ENCODE measurements at regions of chr6 and their contacts with region 1.

Region 1: DNA sequence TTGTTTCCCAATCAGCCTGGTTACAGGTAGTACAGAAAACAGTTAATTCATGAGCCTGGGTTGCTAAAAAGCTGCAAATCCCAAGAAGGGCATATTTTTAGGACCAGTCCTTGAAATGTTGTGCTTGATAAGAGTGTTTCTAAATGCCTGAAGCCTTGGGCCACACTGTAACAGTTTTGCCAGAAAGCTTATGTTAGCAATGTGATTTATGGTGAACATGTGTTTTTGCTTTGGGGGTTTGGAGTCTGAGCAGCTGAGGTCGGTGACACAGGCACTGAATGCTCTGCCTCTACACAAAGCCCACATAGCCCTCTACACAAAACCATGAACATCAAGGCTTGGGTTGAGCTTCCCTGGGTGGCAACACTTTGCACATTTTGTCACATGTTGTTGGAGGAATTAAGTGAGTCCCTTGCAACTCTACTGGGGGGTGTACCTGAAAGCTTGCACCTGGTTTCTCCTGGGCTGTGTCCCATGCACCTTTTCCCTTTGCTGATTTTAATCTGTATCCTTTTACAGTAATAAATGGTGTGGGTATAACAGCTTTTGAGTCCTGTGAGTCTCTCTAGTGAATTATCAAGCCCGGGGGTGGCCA is 22.2 kb downstream of the AHI1 start:
- DNase-seq: no peak
- H3K4me3 ChIP-seq: no peak overlapping the region
- H3K27ac ChIP-seq: no peak overlapping the region
- H3K4me1 ChIP-seq: no peaks in the 10 kb centered on the region
- CTCF ChIP-seq: no peak

Region 2: GRCh38 chr6:135488023-135488422 is 12.6 kb after region 1 on chr6:
- CTCF ChIA-PET with region 1: no interaction called
- POLR2A ChIA-PET with region 1: interaction called, 14 read pairs
- intact Hi-C with region 1: no loop called
- DNase-seq: no peak
- H3K4me3 ChIP-seq: no peak overlapping the region
- H3K27ac ChIP-seq: no peak overlapping the region
- H3K4me1 ChIP-seq: no peaks in the 10 kb centered on the region
- CTCF ChIP-seq: no peak

Region 3: DNA sequence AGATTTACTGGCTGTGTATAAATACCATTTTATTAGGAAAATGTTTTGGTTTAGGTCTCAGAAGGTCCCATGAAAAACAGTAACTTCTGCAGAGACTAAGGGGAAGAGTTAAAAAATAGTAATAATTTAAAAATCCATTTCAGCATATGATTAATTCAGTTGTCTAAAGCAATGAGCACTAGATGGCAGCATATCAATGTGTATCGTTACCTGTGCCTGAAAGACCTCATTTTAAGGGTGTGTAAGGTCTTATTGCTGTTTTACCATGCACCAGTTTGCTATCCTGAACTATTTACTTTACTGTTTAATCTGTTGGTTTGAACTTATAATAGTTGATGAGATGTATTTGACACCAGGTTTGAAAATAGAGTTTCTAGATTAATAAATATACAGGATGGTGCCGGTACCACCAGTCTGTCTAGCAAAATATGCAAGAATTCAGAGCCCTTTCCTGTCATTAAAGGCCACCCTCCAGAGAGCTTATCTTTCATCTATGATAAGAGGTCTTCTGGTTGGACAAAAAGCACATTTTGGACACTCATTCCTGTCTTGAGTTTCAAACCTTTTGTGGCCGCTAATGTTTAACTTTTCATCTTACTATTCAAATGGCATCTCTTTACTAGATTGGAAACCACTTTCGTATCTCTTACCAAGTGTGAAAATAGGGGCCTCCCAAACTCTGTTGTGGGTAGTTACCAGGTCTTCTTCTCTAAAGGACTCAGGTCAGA is 31.0 kb after region 1 on chr6:
- CTCF ChIA-PET with region 1: no interaction called
- POLR2A ChIA-PET with region 1: no interaction called
- intact Hi-C with region 1: no loop called
- DNase-seq: peak; percentile 59
- H3K4me3 ChIP-seq: no peak overlapping the region
- H3K27ac ChIP-seq: no peak overlapping the region
- H3K4me1 ChIP-seq: no peaks in the 10 kb centered on the region
- CTCF ChIP-seq: peak; percentile 89

Measured in OCI-LY7 (cell line).